ENCODE measurements at regions of chr13 and their contacts with region 1.

Region 1: GRCh38 chr13:74287724-74288169 is 153.5 kb upstream of the KLF12 start:
- DNase-seq: peak; percentile 30
- H3K4me3 ChIP-seq: no peak overlapping the region
- H3K27ac ChIP-seq: no peak overlapping the region
- H3K27me3 ChIP-seq: no peaks in the 10 kb centered on the region
- CTCF ChIP-seq: no peak

Region 2: DNA sequence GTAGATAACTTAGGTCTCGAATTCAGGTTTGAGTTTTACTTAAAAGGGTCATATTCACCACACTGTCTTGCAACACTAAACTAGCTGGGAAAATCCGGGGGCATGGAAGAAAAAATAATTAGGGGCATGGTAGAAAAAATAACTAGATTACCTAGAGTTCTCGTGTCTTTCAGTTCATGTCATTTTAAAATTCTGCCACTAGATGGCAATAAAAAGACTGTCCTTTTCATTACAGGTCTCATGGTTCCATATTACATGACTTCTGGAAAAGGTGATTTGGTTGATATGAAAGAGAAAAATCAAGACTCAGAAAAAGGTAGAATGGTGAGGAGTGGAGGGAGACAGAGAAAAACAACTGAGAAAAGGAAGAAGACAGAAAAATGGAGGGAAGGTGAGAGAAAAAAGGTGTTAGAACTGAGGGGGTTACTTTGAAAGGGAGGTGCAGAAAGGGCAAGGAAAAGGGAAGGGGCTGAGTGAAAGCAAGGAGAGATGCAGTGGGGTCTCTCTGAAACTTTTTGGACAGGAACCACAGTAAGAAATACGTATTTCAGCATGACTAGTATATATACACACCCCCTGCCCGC is 452.5 kb before region 1 on chr13:
- CTCF ChIA-PET with region 1: interaction called, 12 read pairs
- POLR2A ChIA-PET with region 1: no interaction called
- DNase-seq: no peak
- H3K4me3 ChIP-seq: no peak overlapping the region
- H3K27ac ChIP-seq: no peak overlapping the region
- H3K27me3 ChIP-seq: no peaks in the 10 kb centered on the region
- CTCF ChIP-seq: peak; percentile 63

Region 3: GRCh38 chr13:74115138-74115537 is 172.6 kb before region 1 on chr13:
- CTCF ChIA-PET with region 1: no interaction called
- POLR2A ChIA-PET with region 1: no interaction called
- DNase-seq: peak; percentile 10
- H3K4me3 ChIP-seq: no peak overlapping the region
- H3K27ac ChIP-seq: peak overlapping the region; percentile 58
- H3K27me3 ChIP-seq: no peaks in the 10 kb centered on the region
- CTCF ChIP-seq: no peak

Region 4: DNA sequence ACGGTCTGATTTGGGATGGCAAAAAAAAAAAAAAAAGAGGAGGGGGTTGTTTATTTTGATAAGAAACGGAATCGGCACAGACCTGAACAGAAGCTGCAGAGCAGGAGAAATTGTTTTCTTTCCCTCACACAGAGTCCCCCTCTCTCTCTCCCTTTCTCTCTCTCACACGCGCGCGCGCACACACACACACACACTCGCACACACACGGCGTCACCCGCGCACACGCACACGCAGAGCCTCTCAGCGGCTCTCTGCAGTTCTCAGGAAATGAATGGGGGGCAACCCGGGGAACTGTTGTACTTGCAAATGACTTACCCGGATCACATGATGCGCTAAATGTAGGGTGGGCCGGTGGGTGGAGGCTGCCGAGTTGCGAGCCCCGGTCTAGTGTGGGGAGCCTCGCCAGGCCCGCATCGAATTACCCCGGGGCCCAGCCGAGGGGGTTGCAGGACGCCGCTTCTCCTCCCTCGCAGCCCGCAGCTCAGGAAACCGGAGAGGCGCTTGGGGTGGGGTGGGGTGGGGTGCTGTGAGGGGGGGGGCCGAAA is 154.0 kb before region 1 on chr13:
- CTCF ChIA-PET with region 1: interaction called, 8 read pairs
- POLR2A ChIA-PET with region 1: interaction called, 10 read pairs
- DNase-seq: peak; percentile 92
- H3K4me3 ChIP-seq: peak overlapping the region; percentile 87
- H3K27ac ChIP-seq: peak overlapping the region; percentile 82
- H3K27me3 ChIP-seq: no peaks in the 10 kb centered on the region
- CTCF ChIP-seq: 0 out of 2 replicates have a peak, but pooled peaks have one; percentile 7

Region 5: GRCh38 chr13:75219479-75220237 is 931.9 kb after region 1 on chr13:
- CTCF ChIA-PET with region 1: interaction called, 11 read pairs
- POLR2A ChIA-PET with region 1: no interaction called
- DNase-seq: peak; percentile 27
- H3K4me3 ChIP-seq: peak overlapping the region; percentile 48
- H3K27ac ChIP-seq: no peak overlapping the region
- H3K27me3 ChIP-seq: peaks cover 11% of the 10 kb centered on the region
- CTCF ChIP-seq: peak; percentile 98

Region 6: DNA sequence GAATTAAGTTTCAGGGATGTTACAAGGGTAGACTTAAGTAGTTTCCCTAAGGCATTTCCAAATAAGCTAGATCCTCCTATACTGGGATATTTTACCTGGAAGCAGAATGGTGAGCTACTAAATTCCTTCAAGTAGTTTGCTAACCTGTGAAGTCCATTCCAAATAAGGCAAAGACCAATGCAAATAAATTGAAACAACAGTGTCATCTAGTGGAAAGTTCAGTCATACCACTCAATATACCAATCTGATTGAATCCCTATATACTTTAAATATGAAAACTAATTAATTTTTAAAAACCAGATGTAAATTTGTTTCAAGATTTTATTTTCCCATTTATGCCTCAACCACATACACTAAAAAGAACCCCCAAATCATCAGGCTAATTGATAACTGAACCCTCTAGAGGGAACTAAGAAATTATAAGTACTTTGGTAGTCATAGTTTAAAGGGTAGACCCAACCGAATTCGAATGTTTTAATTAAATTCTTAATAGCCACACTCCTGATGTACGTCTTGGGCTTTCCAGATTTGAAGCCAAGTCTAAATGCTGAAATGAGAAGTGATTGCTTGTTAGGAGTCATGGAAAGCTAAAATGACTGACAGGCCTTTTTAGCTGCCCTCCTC is 970.5 kb after region 1 on chr13:
- CTCF ChIA-PET with region 1: interaction called, 11 read pairs
- POLR2A ChIA-PET with region 1: no interaction called
- DNase-seq: no peak
- H3K4me3 ChIP-seq: no peak overlapping the region
- H3K27ac ChIP-seq: no peak overlapping the region
- H3K27me3 ChIP-seq: no peaks in the 10 kb centered on the region
- CTCF ChIP-seq: peak; percentile 74